ENCODE measurements at regions of chr13 and their contacts with region 1.

Region 1: GRCh38 chr13:81058916-81059290 is 718.0 kb upstream of the SPRY2 start:
- DNase-seq: no peak
- H3K4me3 ChIP-seq: no peak overlapping the region
- H3K4me3 Mint-ChIP-seq: no peak overlapping the region
- H3K27ac Mint-ChIP-seq: no peak overlapping the region
- H3K4me1 ChIP-seq: peaks cover 9% of the 10 kb centered on the region
- H3K4me1 Mint-ChIP-seq: peaks cover 13% of the 10 kb centered on the region
- H3K27me3 ChIP-seq: no peaks in the 10 kb centered on the region
- H3K27me3 Mint-ChIP-seq: no peaks in the 10 kb centered on the region
- CTCF ChIP-seq: no peak

Region 2: DNA sequence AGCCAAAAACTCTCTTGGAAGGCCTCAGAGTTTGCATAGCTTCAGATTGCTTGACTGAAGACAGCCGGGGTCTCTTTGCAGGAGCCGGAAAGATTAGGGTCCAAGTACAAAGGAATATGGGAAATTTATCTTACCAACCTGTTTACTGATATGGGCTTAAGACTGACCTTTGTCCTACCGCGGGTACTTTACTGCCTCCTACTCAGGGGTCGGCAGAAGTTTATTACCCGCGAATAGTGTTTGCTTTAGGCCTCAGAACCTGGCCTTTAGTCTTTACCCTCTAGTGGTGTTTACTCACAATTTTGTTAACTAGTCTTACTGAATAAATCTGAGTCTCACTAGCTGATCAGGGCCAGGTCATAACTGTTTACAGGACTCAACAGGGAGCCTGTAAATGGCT is 47.4 kb after region 1 on chr13:
- CTCF ChIA-PET with region 1: interaction called, 6 read pairs
- POLR2A ChIA-PET with region 1: no interaction called
- intact Hi-C with region 1: loop called (anchors 1 kb)
- DNase-seq: peak; percentile 75 to 92
- H3K4me3 ChIP-seq: no peak overlapping the region
- H3K4me3 Mint-ChIP-seq: peak overlapping the region; percentile 57
- H3K27ac Mint-ChIP-seq: peak overlapping the region; percentile 82
- H3K4me1 ChIP-seq: peaks cover 54% of the 10 kb centered on the region
- H3K4me1 Mint-ChIP-seq: peaks cover 26% of the 10 kb centered on the region
- H3K27me3 ChIP-seq: no peaks in the 10 kb centered on the region
- H3K27me3 Mint-ChIP-seq: no peaks in the 10 kb centered on the region
- CTCF ChIP-seq: no peak

Region 3: GRCh38 chr13:81139987-81140386 is 81.1 kb after region 1 on chr13:
- CTCF ChIA-PET with region 1: no interaction called
- POLR2A ChIA-PET with region 1: no interaction called
- intact Hi-C with region 1: loop called (anchors 1 kb)
- DNase-seq: no peak
- H3K4me3 ChIP-seq: no peak overlapping the region
- H3K4me3 Mint-ChIP-seq: peak overlapping the region; percentile 14
- H3K27ac Mint-ChIP-seq: peak overlapping the region; percentile 85
- H3K4me1 ChIP-seq: peaks cover 83% of the 10 kb centered on the region
- H3K4me1 Mint-ChIP-seq: peaks cover 55% of the 10 kb centered on the region
- H3K27me3 ChIP-seq: no peaks in the 10 kb centered on the region
- H3K27me3 Mint-ChIP-seq: no peaks in the 10 kb centered on the region
- CTCF ChIP-seq: no peak

Region 4: GRCh38 chr13:81480634-81481033 is 421.7 kb after region 1 on chr13:
- CTCF ChIA-PET with region 1: interaction called, 10 read pairs
- POLR2A ChIA-PET with region 1: no interaction called
- intact Hi-C with region 1: loop called (anchors 1 kb)
- DNase-seq: no peak
- H3K4me3 ChIP-seq: no peak overlapping the region
- H3K4me3 Mint-ChIP-seq: no peak overlapping the region
- H3K27ac Mint-ChIP-seq: no peak overlapping the region
- H3K4me1 ChIP-seq: no peaks in the 10 kb centered on the region
- H3K4me1 Mint-ChIP-seq: no peaks in the 10 kb centered on the region
- H3K27me3 ChIP-seq: no peaks in the 10 kb centered on the region
- H3K27me3 Mint-ChIP-seq: no peaks in the 10 kb centered on the region
- CTCF ChIP-seq: peak in 1 of 2 experiments; percentile 33

Region 5: GRCh38 chr13:81610644-81611043 is 551.7 kb after region 1 on chr13:
- CTCF ChIA-PET with region 1: no interaction called
- POLR2A ChIA-PET with region 1: no interaction called
- intact Hi-C with region 1: loop called (anchors 2 kb)
- DNase-seq: no peak
- H3K4me3 ChIP-seq: no peak overlapping the region
- H3K4me3 Mint-ChIP-seq: no peak overlapping the region
- H3K27ac Mint-ChIP-seq: no peak overlapping the region
- H3K4me1 ChIP-seq: no peaks in the 10 kb centered on the region
- H3K4me1 Mint-ChIP-seq: no peaks in the 10 kb centered on the region
- H3K27me3 ChIP-seq: no peaks in the 10 kb centered on the region
- H3K27me3 Mint-ChIP-seq: no peaks in the 10 kb centered on the region
- CTCF ChIP-seq: no peak

Region 6: GRCh38 chr13:82647540-82647939 is 1588.6 kb after region 1 on chr13:
- CTCF ChIA-PET with region 1: no interaction called
- POLR2A ChIA-PET with region 1: no interaction called
- intact Hi-C with region 1: loop called (anchors 5 kb)
- DNase-seq: no peak
- H3K4me3 ChIP-seq: no peak overlapping the region
- H3K4me3 Mint-ChIP-seq: no peak overlapping the region
- H3K27ac Mint-ChIP-seq: no peak overlapping the region
- H3K4me1 ChIP-seq: no peaks in the 10 kb centered on the region
- H3K4me1 Mint-ChIP-seq: no peaks in the 10 kb centered on the region
- H3K27me3 ChIP-seq: no peaks in the 10 kb centered on the region
- H3K27me3 Mint-ChIP-seq: no peaks in the 10 kb centered on the region
- CTCF ChIP-seq: no peak

Measured in Caco-2 (cell line).